ENCODE measurements at regions of chr11 and their contacts with region 1.

Region 1: DNA sequence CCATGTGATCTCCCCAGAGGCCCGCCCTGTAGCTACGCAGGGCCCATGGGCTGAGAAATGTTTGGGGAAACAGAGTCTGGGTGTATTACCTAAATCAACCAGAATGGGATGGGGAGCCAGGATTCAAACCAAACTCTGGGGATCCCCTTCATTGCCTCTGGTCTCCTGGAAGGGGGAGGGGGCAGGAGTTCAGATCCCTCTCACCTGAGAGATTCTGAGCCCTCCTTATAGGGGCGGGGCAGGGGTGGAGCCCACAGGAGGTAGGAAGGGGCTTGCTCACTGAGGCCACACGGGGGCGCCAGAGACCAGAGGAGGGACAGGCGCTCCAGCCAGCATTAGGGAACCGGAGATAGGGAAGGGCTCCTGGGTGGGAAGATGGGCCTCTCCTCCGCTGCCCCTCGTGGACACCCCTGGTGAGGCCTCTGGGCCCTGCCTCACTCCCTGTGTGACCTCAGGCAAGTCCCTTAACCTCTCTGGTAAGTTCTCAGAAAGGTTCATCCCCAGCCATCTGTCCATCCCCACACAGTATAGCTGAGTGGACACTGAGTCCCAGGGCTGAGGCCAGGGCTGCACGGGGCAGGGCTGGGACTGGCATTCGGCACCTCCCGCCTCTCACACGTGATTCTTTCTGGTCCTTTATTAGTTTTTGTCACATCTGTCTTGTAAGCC is 2.7 kb upstream of the CDC42BPG start:
- DNase-seq: peak; percentile 85
- H3K4me3 ChIP-seq: no peak overlapping the region
- H3K27ac ChIP-seq: no peak overlapping the region
- H3K4me1 ChIP-seq: no peaks in the 10 kb centered on the region
- H3K27me3 ChIP-seq: no peaks in the 10 kb centered on the region
- CTCF ChIP-seq: peak; percentile 87 to 96
- POLR2A ChIP-seq: no peak

Region 2: DNA sequence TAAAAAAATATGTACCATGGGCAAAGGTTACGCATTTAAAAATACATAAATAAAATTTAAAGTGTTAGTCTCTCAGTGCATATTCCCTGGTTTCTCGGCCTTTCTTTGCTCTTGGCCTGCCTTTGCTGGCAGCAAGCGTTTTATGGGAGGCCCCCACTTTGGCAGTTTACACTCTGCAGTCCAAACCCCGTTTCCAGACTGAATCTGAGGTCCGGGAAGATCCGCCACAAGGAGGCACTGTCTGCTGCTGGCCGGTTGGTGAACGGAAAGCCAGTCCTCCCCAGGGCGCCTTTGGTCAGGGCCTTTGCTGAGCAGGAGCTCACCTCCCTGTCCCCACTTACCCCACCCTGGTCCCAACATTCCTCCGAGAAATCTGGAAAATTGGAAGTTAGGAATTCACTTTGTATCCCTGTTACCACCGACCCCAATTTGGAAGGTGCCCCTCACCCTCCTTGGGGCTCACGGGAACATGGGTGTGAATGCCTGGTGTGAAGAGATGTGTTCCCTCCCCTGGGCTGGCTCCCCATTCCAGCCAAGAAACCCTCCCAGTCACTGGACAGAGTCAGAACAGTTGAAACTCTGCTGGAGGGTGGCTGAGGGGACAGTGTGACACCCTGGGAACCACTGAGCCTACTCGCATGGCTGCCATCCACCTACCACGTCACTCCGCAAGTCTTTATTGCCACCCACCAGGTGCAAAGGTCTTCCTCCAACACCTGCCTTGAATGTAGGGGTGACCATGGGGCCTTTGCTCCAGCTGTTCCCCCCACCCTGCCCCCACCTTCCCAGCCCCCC is 59.4 kb before region 1 on chr11:
- CTCF ChIA-PET with region 1: interaction called, 13 read pairs
- POLR2A ChIA-PET with region 1: no interaction called
- dilution Hi-C with region 1: no loop called
- intact Hi-C with region 1: loop called (anchors 2 kb)
- DNase-seq: peak; percentile 52
- H3K4me3 ChIP-seq: no peak overlapping the region
- H3K27ac ChIP-seq: no peak overlapping the region
- H3K4me1 ChIP-seq: no peaks in the 10 kb centered on the region
- H3K27me3 ChIP-seq: no peaks in the 10 kb centered on the region
- CTCF ChIP-seq: peak; percentile 83 to 89
- POLR2A ChIP-seq: no peak

Region 3: DNA sequence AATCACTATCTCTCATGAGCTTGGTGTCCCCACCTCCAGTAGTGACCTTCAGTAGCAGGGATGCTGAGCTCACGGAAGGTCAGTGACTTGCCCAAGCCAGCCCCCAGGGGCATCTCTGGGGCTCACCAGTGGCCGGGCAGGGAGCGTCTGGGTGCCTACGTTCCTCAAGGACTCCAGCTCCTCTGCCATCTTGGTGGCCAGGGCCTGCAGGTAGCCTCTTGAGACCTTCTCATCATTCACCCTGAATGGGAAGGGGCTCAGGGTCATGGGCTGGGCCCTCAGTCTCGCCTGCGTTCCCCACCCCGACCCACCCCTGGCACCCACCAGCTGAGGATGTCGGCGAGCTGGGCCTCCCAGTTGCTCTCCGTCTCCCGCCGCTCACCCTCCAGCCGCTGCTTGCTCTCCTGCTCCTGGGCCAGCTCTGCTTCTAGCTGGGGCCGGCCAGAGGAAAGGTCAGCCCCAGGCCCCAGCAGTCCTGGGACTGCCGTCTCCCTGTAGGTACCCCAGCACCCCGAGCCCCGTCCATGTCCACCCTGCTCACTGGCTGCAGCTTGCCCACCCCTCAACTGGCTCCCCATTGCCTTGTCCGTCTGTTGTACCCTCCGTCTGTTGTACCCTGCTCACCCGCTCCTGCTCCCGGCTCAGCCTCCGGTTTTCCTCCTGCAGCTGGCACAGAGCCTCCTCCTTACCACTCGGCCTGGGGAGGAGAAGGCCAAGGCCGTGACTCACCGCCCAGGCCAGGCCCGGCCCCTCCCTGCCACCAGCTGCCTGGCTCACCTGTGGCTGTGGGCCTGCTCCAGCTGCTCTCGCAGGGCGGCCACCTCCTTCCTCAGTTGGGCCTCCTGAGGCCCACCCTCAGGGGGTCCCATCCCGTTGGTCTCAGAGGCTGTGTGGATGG is 12.2 kb before region 1 on chr11:
- CTCF ChIA-PET with region 1: interaction called, 18 read pairs
- POLR2A ChIA-PET with region 1: no interaction called
- dilution Hi-C with region 1: no loop called
- intact Hi-C with region 1: no loop called
- DNase-seq: no peak
- H3K4me3 ChIP-seq: no peak overlapping the region
- H3K27ac ChIP-seq: no peak overlapping the region
- H3K4me1 ChIP-seq: no peaks in the 10 kb centered on the region
- H3K27me3 ChIP-seq: no peaks in the 10 kb centered on the region
- CTCF ChIP-seq: no peak
- POLR2A ChIP-seq: no peak

Region 4: DNA sequence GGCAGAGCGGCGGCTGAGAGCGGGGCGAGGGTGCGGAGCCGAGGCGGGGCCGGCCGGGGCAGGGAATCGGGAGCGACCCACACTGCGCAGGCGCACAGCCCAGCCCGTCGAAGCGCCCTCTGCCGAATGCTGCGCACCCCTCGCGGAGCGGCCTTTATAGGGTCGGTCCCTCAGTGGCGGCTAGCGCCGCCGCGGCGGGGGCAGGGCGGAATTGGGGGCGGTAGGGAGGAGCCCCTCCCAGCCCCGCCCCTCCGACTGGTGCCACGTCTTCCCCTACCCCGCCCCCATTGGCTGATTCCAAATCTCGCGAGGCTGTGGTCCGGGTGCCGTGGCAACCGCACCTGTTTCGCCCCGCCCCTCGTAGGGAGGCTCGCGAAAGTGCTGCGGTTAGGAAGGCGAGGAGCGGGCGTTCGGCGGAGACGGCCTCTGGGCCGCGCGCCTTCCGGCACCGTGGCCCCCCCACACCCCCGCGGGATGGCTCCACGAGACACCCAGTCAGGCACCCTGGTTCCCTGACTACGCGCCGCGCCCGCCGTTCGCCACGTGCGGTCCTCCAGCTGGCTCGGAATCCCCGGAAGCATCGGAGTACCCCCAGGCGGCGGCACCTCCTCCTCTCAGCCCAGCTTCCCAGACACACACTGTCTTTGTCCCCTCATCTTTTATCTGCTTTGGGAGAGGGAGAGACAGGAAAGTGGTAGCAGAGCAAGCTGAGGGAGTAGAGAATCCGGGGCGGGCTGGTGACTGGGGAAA is 31.5 kb after region 1 on chr11 and contains the start of gene EHD1:
- CTCF ChIA-PET with region 1: interaction called, 77 read pairs
- POLR2A ChIA-PET with region 1: interaction called, 24 read pairs
- dilution Hi-C with region 1: no loop called
- intact Hi-C with region 1: loop called (anchors 1 kb)
- DNase-seq: peak; percentile 97
- H3K4me3 ChIP-seq: peak within 1 kb of the TSS; percentile 54 to 92 (median 74)
- H3K27ac ChIP-seq: peak within 1 kb of the TSS; percentile 71
- H3K4me1 ChIP-seq: peaks cover 22% of the 10 kb centered on the region
- H3K27me3 ChIP-seq: no peaks in the 10 kb centered on the region
- CTCF ChIP-seq: peak; percentile 42 to 74
- POLR2A ChIP-seq: peak; percentile 99
- total RNA-seq, gene EHD1: 98.0 and 109 TPM in 2 replicates

Region 5: GRCh38 chr11:64894070-64894796 is 47.1 kb after region 1 on chr11:
- CTCF ChIA-PET with region 1: interaction called, 168 read pairs
- POLR2A ChIA-PET with region 1: no interaction called
- dilution Hi-C with region 1: loop called (anchors 10 kb)
- intact Hi-C with region 1: loop called (anchors 1 kb)
- DNase-seq: peak; percentile 44
- H3K4me3 ChIP-seq: no peak overlapping the region
- H3K27ac ChIP-seq: no peak overlapping the region
- H3K4me1 ChIP-seq: no peaks in the 10 kb centered on the region
- H3K27me3 ChIP-seq: no peaks in the 10 kb centered on the region
- CTCF ChIP-seq: peak; percentile 93 to 95
- POLR2A ChIP-seq: no peak

Region 6: GRCh38 chr11:65083834-65084597 is 236.9 kb after region 1 on chr11 and contains the starts of genes CDCA5 and ZFPL1:
- CTCF ChIA-PET with region 1: no interaction called
- POLR2A ChIA-PET with region 1: no interaction called
- dilution Hi-C with region 1: no loop called
- intact Hi-C with region 1: no loop called
- DNase-seq: peak; percentile 96
- H3K4me3 ChIP-seq: peak within 1 kb of the TSS; percentile 58 to 92 (median 83)
- H3K27ac ChIP-seq: peak within 1 kb of the TSS; percentile 61
- H3K4me1 ChIP-seq: peaks cover 17% of the 10 kb centered on the region
- H3K27me3 ChIP-seq: no peaks in the 10 kb centered on the region
- CTCF ChIP-seq: no peak
- POLR2A ChIP-seq: no peak
- total RNA-seq, gene CDCA5: 34.1 and 35.7 TPM in 2 replicates
- total RNA-seq, gene ZFPL1: 37.6 and 45.1 TPM in 2 replicates

Region 7: DNA sequence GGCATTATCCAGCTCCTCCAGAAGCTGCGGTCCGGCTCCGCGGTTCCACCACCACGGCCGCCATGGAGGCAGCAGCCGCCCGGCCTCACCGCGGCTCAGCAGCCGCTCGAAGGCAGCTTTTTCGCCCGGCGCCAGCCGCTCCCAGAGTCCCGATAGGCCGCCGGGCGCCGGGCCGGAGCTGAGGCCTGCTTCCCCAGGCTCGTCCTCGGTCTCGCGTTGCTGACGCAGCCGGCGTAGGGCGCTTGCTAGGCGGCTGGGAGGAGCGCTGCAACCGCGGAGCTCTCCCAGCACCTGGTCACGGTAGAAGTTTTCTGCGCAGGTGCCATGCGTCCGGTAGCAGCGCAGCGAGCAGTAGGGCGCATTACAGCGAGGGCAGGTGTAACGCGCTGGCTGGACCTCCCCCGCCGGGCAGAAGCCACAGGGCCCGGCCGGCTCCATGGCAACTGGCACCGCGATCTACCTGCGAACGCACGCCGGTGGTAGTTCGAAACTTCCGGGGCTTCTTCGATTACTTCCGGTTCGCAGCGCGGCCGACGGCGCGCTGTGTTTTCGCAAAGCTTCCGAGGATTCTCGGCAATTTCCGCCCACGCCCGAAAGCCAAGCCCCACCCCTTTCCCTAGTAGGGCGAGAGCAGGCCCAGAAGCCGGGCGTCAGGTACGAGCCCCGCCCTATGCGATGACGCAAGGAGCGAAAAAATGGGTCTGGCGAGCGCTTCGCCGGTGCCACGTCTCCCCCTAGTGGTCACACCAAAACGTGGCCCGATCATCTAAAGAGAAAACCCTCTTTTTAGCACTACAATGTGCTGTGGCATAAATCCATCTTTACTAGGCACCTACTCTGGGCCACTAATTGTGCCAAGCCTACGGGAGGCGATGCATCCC is 270.3 kb after region 1 on chr11 and contains the start of gene ZNHIT2:
- CTCF ChIA-PET with region 1: interaction called, 3 read pairs
- POLR2A ChIA-PET with region 1: no interaction called
- dilution Hi-C with region 1: no loop called
- intact Hi-C with region 1: loop called (anchors 1 kb)
- DNase-seq: peak; percentile 99
- H3K4me3 ChIP-seq: peak within 1 kb of the TSS; percentile 24 to 75 (median 46)
- H3K27ac ChIP-seq: peak within 1 kb of the TSS; percentile 9
- H3K4me1 ChIP-seq: peaks cover 21% of the 10 kb centered on the region
- H3K27me3 ChIP-seq: no peaks in the 10 kb centered on the region
- CTCF ChIP-seq: peak; percentile 89 to 91
- POLR2A ChIP-seq: peak; percentile 85
- total RNA-seq, gene ZNHIT2: 9.0 and 9.2 TPM in 2 replicates